ENCODE measurements at regions of chr6 and their contacts with region 1.

Region 1: DNA sequence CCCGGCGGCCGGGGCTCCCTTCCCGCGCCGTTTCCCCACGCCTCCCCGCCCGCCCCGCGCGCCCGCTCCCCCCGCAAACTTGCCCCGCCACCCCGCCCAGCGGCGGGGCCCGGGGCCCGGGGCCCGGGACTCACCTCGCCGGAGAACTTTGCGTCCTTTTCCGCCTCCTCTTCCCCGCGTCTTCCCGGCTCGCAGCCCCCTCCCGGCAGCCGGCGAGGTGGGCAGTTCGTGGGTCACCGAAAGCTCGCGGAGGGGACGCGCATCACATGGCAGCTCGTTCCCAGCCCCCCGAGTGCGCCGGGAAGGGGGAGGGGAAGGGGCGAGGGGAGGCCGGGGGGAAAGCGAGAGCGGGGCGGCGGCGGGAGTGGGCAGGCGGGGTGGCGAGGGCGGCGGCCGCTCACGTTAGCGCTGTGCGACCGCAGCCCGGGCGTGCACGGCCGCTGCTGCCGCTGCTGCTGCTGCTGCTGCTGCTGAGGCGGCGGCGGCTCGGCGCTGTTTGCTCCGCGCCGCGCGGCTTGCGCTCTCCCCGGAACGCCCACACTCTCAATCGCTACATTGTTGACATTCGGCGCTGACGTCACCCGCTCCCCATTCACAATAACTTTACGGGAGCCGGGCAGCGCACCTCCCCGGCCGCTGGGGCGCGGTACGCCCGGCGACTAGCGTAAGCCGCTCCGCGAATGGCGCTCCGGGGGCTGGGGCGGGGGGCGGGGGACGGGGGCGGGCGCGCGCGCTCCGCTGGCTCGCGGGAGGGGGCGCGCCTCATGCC is at the start of gene BACH2:
- DNase-seq: peak; percentile 97
- H3K4me3 ChIP-seq: peak within 1 kb of the TSS; percentile 92 to 98 (median 96)
- H3K27ac ChIP-seq: peak within 1 kb of the TSS; percentile 96 to 97 (median 96)
- H3K4me1 ChIP-seq: peaks cover 9 to 36% (median 31%) of the 10 kb centered on the region in 4 donors
- H3K27me3 ChIP-seq: no peaks in the 10 kb centered on the region
- CTCF ChIP-seq: peak in 2 of 3 experiments; percentile 12 to 42
- EP300 ChIP-seq: no peak
- POLR2A ChIP-seq: peak; percentile 29
- total RNA-seq, gene BACH2: 4.2 to 9.8 (median 5.8) TPM

Region 2: DNA sequence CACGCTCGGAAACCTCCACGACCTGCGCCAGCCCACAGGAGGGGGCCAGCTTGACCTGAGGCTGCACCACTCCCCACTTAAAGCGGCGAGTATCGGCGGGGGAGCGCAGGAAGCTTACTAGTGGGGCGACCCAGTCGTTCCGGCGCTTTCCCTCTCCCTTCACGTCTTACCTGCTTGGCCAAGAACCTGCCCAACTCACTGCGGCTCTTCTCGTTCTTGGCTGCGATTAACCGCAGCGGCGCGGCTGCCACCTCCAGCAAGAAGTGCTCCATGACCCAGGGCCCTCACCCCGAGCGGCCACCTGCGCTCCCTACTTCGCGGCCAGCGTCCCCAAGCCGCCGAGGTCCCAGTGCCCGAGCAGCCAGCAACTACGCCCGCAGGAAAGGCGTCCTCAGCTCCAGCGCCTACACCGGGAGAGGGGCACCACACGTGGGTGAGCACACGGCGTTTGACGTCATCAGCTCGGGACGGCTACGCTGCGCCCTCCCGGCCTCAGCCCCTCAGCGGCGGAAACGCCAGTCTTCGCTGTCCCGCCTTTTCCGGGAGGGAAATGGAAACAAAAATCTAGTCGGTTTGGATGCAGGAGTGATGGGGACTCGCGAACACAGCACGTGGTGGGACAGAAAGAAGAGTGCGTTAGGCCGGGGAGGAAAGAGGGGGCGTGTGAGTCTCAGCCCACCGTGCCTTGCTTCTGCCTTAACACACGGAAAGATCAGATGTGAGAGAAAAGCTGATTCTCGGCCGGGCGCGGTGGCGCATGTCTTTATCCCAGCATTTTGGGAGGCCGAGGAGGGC is 477.0 kb before region 1 on chr6 and contains the start of gene MDN1:
- intact Hi-C with region 1: loop called (anchors 10 kb)
- DNase-seq: peak; percentile 96
- H3K4me3 ChIP-seq: peak within 1 kb of the TSS; percentile 75 to 98 (median 88)
- H3K27ac ChIP-seq: peak within 1 kb of the TSS; percentile 89 to 93 (median 90)
- H3K4me1 ChIP-seq: peaks cover 14 to 33% (median 26%) of the 10 kb centered on the region in 4 donors
- H3K27me3 ChIP-seq: no peaks in the 10 kb centered on the region
- CTCF ChIP-seq: no peak
- EP300 ChIP-seq: no peak
- POLR2A ChIP-seq: no peak
- total RNA-seq, gene MDN1: 18.1 to 26.0 (median 19.5) TPM

Region 3: DNA sequence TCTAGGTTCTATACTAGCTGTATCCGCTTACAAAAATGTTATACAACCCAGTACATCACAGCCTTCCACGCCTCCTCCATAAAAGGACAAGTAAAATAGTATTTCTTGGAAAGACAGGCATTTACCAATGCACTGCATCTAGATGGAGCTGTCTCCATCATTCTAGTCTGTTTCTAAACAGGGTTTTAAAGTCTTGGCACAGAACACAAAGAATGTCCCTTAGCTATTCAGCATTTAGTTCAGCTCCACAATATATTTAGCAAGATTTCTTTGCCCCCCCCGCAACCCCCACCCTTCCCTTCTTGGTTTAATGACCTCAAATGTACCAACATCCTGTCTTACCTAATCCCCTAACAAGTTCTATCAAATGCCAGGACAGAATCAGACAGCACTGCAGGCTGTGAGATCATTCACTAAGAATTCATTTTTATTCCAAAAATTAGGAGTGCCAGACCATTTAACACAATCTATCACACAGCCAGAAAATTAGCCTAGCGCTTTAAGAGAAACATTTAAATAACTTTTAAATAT is 198.5 kb before region 1 on chr6:
- intact Hi-C with region 1: loop called (anchors 5 kb)
- DNase-seq: peak; percentile 97
- H3K4me3 ChIP-seq: no peak overlapping the region
- H3K27ac ChIP-seq: peak overlapping the region; percentile 81 to 85 (median 82)
- H3K4me1 ChIP-seq: peaks cover 22 to 33% (median 32%) of the 10 kb centered on the region in 4 donors
- H3K27me3 ChIP-seq: no peaks in the 10 kb centered on the region
- CTCF ChIP-seq: peak; percentile 33 to 54 (median 44)
- EP300 ChIP-seq: no peak
- POLR2A ChIP-seq: no peak

Region 4: GRCh38 chr6:90369024-90369519 is 72.5 kb after region 1 on chr6:
- intact Hi-C with region 1: loop called (anchors 2 kb)
- DNase-seq: no peak
- H3K4me3 ChIP-seq: no peak overlapping the region
- H3K27ac ChIP-seq: peak overlapping the region; percentile 79 to 84 (median 80)
- H3K4me1 ChIP-seq: peaks cover 6 to 21% (median 19%) of the 10 kb centered on the region in 4 donors
- H3K27me3 ChIP-seq: no peaks in the 10 kb centered on the region
- CTCF ChIP-seq: no peak
- EP300 ChIP-seq: peak; percentile 54
- POLR2A ChIP-seq: no peak

Region 5: GRCh38 chr6:90478789-90479602 is 182.5 kb after region 1 on chr6:
- intact Hi-C with region 1: loop called (anchors 5 kb)
- DNase-seq: peak; percentile 96
- H3K4me3 ChIP-seq: no peak overlapping the region
- H3K27ac ChIP-seq: peak overlapping the region in 1 of 4 donors; percentile 10
- H3K4me1 ChIP-seq: peaks cover 5 to 10% (median 8%) of the 10 kb centered on the region in 4 donors
- H3K27me3 ChIP-seq: no peaks in the 10 kb centered on the region
- CTCF ChIP-seq: peak; percentile 88 to 93 (median 93)
- EP300 ChIP-seq: no peak
- POLR2A ChIP-seq: no peak

Measured in esophagus muscularis mucosa (tissue), 4 donors.